ENCODE measurements at regions of chr5 and their contacts with region 1.

Region 1: DNA sequence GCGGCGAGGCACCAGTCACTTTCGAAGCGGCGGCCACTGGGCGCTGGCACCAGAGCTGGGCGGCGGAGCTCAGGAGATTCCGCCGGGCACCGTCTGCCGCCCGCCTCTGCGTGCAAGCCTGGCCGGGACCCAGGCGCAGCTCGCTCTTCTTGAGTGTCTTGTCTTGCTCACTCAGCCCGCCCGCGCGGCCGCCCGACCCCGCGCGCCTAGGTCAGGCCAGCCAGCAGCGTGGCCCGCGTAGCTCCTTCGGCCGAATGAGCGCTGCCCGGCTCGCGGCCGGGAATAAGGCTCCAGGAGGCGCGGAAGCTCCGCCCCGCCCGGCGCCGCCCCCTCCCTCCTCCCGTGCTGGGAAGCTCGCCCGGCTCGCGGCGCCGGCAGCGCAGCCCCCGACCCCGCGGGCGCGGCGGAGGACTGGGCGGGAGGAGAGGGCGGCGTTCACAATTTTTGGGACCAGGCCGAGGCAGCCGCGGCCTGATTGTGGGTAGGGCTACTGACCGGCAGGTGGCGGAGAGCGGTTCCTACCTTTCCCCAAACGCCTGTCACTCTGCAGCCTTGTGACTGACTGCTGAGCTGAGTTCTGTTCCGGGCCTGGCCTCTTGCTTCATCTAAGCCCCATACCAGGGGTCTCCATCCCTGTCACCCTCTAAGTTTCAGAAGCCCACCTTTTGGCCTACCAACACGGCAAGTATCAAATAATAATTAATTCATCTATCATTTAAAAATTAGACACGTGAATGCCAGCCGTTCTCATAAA is at the start of gene HBEGF:
- DNase-seq: peak; percentile 60
- ATAC-seq: peak; percentile 72
- H3K4me3 Mint-ChIP-seq: peak within 1 kb of the TSS; percentile 80
- H3K27ac Mint-ChIP-seq: peak within 1 kb of the TSS; percentile 68
- H3K4me1 Mint-ChIP-seq: peaks cover 59% of the 10 kb centered on the region
- H3K27me3 Mint-ChIP-seq: peaks cover 15% of the 10 kb centered on the region
- total RNA-seq, gene HBEGF: 10.7 to 13.5 TPM

Region 2: DNA sequence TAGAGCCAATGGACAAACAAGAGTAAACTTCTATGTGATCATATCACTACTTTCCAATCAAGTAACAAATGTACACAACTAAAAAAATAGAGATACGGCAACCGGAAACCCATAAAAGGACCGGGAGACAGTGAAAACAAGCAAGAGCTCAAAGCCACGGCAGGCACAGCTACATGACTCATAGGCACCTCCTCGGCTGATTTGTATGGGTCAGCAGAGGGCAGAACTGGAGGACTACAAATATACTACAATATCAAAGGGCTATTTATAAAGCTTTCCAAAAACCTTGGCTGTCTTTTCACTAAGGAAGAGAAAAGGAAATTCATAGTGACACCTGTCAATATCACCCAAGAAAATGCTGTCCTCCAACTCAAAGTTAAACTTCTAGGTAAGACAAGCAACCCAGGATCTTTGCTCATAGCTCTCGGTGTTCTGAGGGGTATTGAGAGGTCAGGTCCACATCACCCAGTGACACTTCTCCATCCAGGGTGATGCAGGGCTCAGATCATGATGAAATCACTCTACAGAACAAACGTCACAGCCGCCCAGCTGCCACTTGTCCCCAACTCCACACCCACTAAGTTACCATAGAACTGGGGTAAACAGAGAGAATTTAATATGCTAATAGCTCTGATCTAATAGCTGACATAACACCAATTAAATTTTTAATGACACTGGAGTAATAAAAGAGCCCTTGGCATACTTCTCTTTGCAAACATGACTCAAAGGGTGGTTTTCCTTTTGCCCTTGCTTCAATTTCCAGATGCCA is 84.9 kb before region 1 on chr5:
- CTCF ChIA-PET with region 1: interaction called, 19 read pairs
- DNase-seq: no peak
- ATAC-seq: peak; percentile 72
- H3K4me3 Mint-ChIP-seq: no peak overlapping the region
- H3K27ac Mint-ChIP-seq: peak overlapping the region; percentile 2
- H3K4me1 Mint-ChIP-seq: peaks cover 63% of the 10 kb centered on the region
- H3K27me3 Mint-ChIP-seq: no peaks in the 10 kb centered on the region

Region 3: DNA sequence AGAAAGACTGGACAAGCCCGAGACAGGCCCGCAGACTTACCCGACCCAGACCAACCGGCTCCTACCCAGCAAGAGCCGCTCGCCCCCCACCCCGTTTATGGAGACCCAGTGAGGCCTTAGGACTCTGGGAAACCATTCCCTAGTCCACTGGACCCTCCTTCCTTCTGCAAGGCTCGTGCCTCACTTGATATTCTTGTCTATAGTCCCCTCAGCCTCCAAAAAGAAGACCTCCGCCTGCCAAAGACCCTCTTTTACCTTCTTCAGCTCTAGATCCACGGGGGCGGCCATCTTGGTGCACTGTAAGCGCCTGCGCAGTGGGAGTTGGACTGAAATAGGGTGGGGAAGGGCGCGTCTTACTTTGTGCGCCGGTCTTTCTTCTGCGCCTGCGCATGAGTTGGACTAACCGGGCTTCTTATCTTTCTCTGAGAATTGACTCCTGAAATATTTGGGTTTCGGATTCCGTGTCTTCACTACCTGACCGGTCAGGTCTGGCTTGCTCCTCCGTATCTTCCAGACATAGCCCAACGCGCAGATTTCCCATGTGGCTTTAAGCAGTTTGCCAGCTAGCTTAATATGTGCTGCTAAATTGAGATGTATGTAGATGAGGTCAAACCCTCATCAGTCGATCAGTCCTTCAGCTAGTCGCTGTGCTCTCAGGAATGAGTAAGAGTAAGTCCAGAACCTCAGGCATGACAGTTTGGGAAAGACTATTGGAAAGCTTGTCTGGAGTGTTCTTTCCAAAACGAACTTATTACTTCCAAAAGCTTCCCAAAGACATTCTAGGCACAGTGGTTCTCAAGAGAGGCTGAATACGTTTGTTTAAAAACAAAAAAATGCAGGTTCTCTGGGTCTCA is 43.5 kb before region 1 on chr5 and contains the start of gene PFDN1:
- CTCF ChIA-PET with region 1: interaction called, 16 read pairs
- DNase-seq: peak; percentile 97
- ATAC-seq: peak; percentile 100
- H3K4me3 Mint-ChIP-seq: peak within 1 kb of the TSS; percentile 90
- H3K27ac Mint-ChIP-seq: peak within 1 kb of the TSS; percentile 94
- H3K4me1 Mint-ChIP-seq: peaks cover 34% of the 10 kb centered on the region
- H3K27me3 Mint-ChIP-seq: peaks cover 7% of the 10 kb centered on the region
- total RNA-seq, gene PFDN1: 48.9 to 57.5 TPM

Region 4: GRCh38 chr5:140357726-140358093 is 11.2 kb after region 1 on chr5:
- CTCF ChIA-PET with region 1: interaction called, 52 read pairs
- DNase-seq: peak; percentile 89
- ATAC-seq: peak; percentile 97
- H3K4me3 Mint-ChIP-seq: peak overlapping the region; percentile 64
- H3K27ac Mint-ChIP-seq: peak overlapping the region; percentile 56
- H3K4me1 Mint-ChIP-seq: peaks cover 19% of the 10 kb centered on the region
- H3K27me3 Mint-ChIP-seq: peaks cover 2% of the 10 kb centered on the region

Region 5: DNA sequence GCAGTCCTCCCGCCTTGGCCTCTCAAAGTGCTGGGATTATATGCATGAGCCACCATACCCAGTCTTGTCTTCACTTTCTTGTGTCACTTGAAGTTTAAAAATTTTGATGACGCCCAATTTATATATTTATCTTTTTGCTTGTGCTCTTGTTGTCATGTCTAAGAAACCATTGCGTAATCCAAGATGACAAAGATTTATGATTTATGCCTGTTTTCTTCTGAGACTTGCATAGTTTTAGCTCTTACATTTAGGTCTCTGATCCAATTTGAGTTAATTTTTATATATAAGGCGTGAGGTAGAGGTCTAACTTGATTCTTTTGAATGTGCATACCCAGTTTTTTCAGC is 73.7 kb after region 1 on chr5:
- CTCF ChIA-PET with region 1: no interaction called
- DNase-seq: no peak
- ATAC-seq: no peak
- H3K4me3 Mint-ChIP-seq: no peak overlapping the region
- H3K27ac Mint-ChIP-seq: no peak overlapping the region
- H3K4me1 Mint-ChIP-seq: peaks cover 31% of the 10 kb centered on the region
- H3K27me3 Mint-ChIP-seq: no peaks in the 10 kb centered on the region